Activated T-helper 2 cell treated with anti-CD3 and anti-CD28 coated beads, Interferon-gamma antibody, Interleukin-2, Interleukin-4, amounts not matched to agents 10 μg/mL and 5 μg/mL and 100 μg/mL, durations not matched to agents 14 hours and 24 hours and 36 hours (primary cell): ENCODE measurements at regions of chr17 and their contacts with region 1.

Region 1: DNA sequence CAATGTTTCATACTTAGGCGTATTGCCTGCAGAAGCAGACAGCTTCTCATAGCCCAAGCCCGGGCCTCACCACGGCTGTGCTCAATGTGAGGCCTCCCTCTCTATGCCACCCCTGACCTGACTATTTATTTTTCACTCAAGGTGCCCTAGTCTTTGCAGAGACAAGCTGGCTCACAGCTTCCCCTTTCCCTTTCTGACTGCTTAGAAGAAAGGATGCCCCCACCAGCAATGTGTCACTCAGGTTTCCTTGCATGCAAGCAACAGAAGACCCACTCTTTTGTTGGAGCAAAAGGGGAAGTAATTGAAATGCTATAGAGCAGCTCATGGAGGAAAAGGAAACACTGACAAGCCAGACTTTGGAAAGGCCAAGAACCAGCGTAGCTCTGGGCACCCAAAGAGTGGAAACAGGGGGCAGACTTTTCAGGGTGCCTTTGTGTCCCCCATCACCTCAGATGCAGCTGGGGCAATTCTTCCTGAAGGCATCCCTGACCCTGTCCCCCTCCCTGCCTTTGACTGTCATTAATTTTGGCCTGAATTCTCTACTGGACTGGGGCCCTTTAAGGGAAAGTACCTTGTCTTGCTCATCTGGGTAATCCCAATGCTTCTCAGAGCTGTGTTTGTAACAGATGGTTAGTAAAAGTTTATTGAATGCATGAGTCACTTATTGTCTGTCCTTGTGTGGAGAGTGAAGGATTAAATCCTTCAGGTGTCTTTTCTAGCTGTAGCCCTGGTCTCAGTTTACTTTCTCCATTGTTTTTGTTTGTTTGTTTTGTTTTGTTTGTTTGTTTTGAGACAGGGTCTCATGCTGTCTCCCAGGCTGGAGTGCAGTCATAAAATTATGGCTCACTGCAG is 17.8 kb downstream of the RGS9 start:
- DNase-seq: no peak
- H3K4me3 Mint-ChIP-seq: no peak overlapping the region
- H3K27ac Mint-ChIP-seq: peak overlapping the region; percentile 29
- H3K4me1 Mint-ChIP-seq: peaks cover 17% of the 10 kb centered on the region
- H3K27me3 Mint-ChIP-seq: no peaks in the 10 kb centered on the region

Region 2: GRCh38 chr17:65191811-65192740 is 37.1 kb after region 1 on chr17:
- intact Hi-C with region 1: loop called (anchors 2 kb)
- DNase-seq: no peak
- H3K4me3 Mint-ChIP-seq: peak overlapping the region; percentile 13
- H3K27ac Mint-ChIP-seq: peak overlapping the region; percentile 81
- H3K4me1 Mint-ChIP-seq: peaks cover 53% of the 10 kb centered on the region
- H3K27me3 Mint-ChIP-seq: no peaks in the 10 kb centered on the region